ENCODE measurements at regions of chr11 and their contacts with region 1.

Region 1: DNA sequence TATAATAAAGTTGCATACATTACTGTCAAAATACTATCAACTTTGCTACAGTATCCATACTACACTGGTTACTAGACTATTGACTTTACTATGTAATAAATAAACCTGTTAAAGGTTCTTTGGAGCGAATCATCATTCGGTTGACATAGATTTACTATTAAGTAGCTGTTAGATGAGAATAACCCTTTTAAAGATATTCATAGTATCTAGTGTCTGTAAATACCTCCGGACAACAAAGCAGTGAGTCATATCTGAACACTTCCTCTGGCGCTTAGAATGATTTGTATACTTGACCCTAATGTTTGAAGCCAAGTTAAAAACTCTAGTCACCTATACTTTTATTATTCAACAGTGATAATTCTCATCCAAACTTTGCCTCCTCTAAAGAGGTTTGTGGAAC is 84.7 kb downstream of the MSANTD4 start:
- DNase-seq: no peak
- H3K4me3 ChIP-seq: no peak overlapping the region
- H3K27ac ChIP-seq: peak overlapping the region; percentile 22
- H3K4me1 ChIP-seq: peaks cover 32% of the 10 kb centered on the region
- H3K27me3 ChIP-seq: peaks cover 0 to 7% of the 10 kb centered on the region in 2 experiments
- CTCF ChIP-seq: no peak
- POLR2A ChIP-seq: no peak

Region 2: DNA sequence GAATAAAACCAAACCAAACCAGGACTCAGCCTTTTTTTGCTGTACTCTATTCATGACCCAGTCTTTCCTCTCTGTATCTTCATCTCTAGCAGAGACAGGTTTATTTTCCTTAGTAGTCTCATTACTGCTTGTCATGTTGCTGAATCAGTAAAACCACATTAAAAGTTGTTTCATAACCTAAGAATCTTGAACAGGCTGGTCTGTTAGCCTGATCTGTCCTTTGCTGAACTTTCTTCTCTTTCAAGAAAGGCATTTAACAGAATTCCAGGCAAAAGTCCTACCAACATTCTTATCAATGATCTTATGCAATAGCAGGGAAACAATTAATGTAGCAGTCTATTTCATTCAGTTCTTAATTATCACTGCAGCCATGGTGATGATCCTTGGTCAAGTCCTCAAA is 1236.7 kb before region 1 on chr11:
- CTCF ChIA-PET with region 1: no interaction called
- POLR2A ChIA-PET with region 1: no interaction called
- dilution Hi-C with region 1: no loop called
- intact Hi-C with region 1: loop called (anchors 5 kb)
- DNase-seq: no peak
- H3K4me3 ChIP-seq: no peak overlapping the region
- H3K27ac ChIP-seq: no peak overlapping the region
- H3K4me1 ChIP-seq: peaks cover 15% of the 10 kb centered on the region
- H3K27me3 ChIP-seq: peaks cover 3 to 4% of the 10 kb centered on the region in 2 experiments
- CTCF ChIP-seq: no peak
- POLR2A ChIP-seq: no peak

Region 3: DNA sequence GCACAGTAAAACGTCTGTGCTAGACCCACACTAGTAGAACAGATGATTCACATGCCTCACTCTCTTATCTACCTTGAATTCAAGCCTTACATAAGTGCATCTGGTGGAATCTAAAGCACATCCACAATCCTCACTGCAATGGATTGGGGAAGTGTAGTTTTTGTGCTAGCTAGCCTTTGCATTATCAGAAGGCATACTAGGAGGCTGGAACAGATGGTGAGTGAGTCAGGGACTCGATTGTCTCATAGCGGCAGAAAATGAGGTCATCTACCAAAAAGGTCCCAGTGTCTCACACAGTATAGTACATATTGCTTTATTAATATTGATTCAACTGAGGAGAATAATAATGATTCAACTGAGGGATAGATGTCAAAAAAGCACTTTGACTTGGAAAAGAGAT is 75.4 kb after region 1 on chr11:
- CTCF ChIA-PET with region 1: no interaction called
- POLR2A ChIA-PET with region 1: no interaction called
- dilution Hi-C with region 1: no loop called
- intact Hi-C with region 1: loop called (anchors 2 kb)
- DNase-seq: peak; percentile 74
- H3K4me3 ChIP-seq: no peak overlapping the region
- H3K27ac ChIP-seq: peak overlapping the region; percentile 85
- H3K4me1 ChIP-seq: peaks cover 9% of the 10 kb centered on the region
- H3K27me3 ChIP-seq: no peaks in the 10 kb centered on the region
- CTCF ChIP-seq: no peak
- POLR2A ChIP-seq: no peak

Region 4: DNA sequence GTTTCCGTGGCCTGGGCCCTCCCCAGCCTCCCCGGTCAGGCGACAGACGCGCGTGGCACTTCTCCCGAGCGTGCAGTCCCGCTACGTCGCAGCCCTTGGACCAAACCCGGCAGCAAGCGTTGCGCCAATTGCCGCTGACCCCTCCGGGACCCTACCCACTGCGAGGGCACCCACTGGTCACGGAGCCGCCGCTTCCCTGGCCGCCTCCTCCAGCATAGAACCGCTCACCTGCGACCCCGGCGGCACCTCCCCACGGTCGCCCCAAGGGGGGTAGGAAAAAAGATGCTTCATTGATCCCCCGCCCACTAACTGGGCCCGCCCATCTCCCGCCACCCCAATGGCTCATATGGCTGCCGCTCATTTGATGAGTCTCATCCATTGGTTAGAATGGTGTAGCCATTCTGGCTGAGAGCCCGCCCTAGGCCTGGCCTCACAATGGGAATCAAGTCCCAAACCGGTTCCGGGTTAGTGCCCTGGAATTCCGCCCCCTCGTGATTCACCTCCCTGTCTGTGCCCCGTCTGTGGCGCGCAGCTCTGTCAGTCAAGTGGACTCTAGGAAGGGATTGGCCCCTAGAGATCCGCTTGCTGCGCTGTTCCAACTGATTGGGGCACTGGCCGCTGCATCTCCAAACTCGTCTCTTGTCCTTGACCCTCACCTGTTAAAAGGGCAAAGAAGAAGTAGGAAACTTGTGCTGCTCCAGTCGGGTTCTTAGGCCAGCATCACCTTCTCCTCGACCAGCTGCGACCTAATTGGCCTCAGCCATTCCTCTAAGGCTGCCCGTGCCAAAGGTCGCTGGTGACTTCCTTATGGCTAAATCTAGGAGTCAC is 84.8 kb after region 1 on chr11 and contains the start of gene MSANTD4:
- CTCF ChIA-PET with region 1: no interaction called
- POLR2A ChIA-PET with region 1: no interaction called
- dilution Hi-C with region 1: no loop called
- intact Hi-C with region 1: loop called (anchors 1 kb)
- DNase-seq: peak; percentile 99
- H3K4me3 ChIP-seq: peak within 1 kb of the TSS; percentile 59 to 97 (median 87)
- H3K27ac ChIP-seq: peak within 1 kb of the TSS; percentile 63
- H3K4me1 ChIP-seq: peaks cover 17% of the 10 kb centered on the region
- H3K27me3 ChIP-seq: no peaks in the 10 kb centered on the region
- CTCF ChIP-seq: no peak
- POLR2A ChIP-seq: peak; percentile 78
- total RNA-seq, gene MSANTD4: 13.8 and 15.0 TPM in 2 replicates